Dendritic cell treated with granulocyte-macrophage colony-stimulating factor and Interleukin-4, amounts not matched to agents 40 ng/mL and 50 ng/mL, for 4 days (primary cell): ENCODE measurements at regions of chr20 and their contacts with region 1.

Region 1: DNA sequence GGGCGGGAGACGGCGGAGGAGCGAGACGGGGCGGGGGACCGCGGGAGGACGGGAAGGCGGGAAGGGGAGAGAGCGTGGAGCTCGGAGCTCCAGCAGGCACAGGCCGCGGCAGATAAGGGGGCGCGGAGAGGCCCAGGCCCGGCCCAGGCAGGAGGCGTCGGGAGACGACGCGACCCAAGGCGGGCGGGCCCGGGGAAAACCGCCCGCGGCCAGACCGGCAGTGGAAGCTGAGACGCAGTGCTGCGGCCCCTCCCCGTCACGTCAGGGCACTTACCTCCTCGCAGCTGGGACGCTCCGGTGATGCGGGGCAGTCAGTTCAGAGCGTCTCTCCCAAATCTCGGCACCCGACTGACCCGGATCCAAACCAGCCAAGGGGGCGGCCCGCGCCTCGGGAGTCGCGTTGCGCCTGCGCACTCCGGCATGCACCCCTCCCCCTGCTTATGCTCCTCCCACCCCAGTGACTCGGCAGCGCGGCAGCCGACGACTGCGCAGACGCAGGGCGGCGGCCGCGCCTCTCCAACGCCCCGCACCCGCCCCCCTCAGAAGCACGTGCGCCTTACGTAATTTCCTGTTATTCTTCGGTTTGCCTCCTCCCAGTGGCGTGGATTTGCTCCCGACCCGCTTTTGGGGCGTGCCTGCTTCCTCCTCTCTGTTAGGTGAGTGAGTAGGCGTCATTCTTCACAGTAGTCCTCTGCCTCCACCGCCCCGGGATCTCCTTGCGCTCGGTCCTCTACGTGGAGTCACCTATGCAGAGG is at the start of gene OSER1:
- H3K4me3 Mint-ChIP-seq: peak within 1 kb of the TSS; percentile 100
- H3K27ac Mint-ChIP-seq: peak within 1 kb of the TSS; percentile 97
- H3K4me1 Mint-ChIP-seq: peaks cover 51% of the 10 kb centered on the region
- H3K27me3 Mint-ChIP-seq: no peaks in the 10 kb centered on the region

Region 2: GRCh38 chr20:44310664-44311639 is 100.4 kb after region 1 on chr20 and contains the start of gene FITM2:
- intact Hi-C with region 1: loop called (anchors 1 kb)
- H3K4me3 Mint-ChIP-seq: peak within 1 kb of the TSS; percentile 84
- H3K27ac Mint-ChIP-seq: peak within 1 kb of the TSS; percentile 79
- H3K4me1 Mint-ChIP-seq: peaks cover 19% of the 10 kb centered on the region
- H3K27me3 Mint-ChIP-seq: peaks cover 9% of the 10 kb centered on the region

Region 3: GRCh38 chr20:44475694-44476560 is 265.3 kb after region 1 on chr20 and contains the start of gene TTPAL:
- intact Hi-C with region 1: loop called (anchors 5 kb)
- H3K4me3 Mint-ChIP-seq: peak within 1 kb of the TSS; percentile 98
- H3K27ac Mint-ChIP-seq: peak within 1 kb of the TSS; percentile 94
- H3K4me1 Mint-ChIP-seq: peaks cover 24% of the 10 kb centered on the region
- H3K27me3 Mint-ChIP-seq: peaks cover 6% of the 10 kb centered on the region

Region 4: GRCh38 chr20:44521484-44522481 is 311.2 kb after region 1 on chr20 and contains the start of gene SERINC3:
- intact Hi-C with region 1: loop called (anchors 5 kb)
- H3K4me3 Mint-ChIP-seq: peak within 1 kb of the TSS; percentile 82
- H3K27ac Mint-ChIP-seq: peak within 1 kb of the TSS; percentile 94
- H3K4me1 Mint-ChIP-seq: peaks cover 35% of the 10 kb centered on the region
- H3K27me3 Mint-ChIP-seq: no peaks in the 10 kb centered on the region

Region 5: DNA sequence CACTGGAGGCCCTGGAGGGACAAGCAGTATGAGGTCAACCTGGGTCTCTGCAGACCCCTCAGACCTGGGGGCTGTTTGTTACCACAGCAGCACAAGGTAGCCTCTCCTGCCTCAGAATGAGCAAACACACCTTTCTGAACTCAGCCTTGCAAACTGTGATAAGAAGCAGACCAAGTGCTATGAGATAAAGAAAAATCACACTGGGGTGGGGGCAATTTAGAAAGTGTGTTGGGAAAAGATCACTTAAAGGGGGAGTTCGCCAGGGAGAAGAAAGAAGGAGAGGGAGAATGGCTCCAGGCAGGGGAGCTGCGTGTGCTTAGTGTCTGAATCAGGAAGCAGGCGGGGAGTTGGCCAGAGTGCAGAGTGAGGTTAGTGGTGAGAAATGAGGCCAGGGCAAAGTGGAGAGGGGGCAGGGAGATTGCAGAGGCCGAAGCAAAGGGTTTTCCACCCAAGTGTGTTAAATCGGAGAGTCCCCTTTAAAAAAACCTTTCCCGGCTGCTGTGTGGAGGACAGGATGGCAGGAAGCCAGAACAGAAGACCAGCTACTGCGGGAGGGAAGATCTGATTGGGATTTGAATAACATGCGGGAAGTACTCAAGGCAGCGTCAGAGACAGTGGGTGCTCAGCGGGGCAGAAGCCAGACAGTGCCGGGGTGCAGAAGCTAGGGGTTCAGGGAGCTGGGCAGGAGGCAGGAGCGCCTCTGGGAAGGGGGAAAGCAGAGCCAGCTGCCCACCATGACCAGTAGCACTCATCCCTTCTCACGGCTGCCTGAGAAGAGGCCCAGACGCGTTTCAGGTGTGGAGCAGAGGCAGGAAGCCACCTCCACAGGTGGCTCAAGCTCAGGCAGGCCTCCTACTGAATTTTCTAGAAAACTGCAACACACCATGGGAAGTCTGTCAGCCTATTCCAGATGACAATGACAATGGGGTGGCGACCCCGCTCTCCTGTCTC is 431.9 kb after region 1 on chr20:
- intact Hi-C with region 1: loop called (anchors 10 kb)
- H3K4me3 Mint-ChIP-seq: peak overlapping the region; percentile 17
- H3K27ac Mint-ChIP-seq: peak overlapping the region; percentile 75
- H3K4me1 Mint-ChIP-seq: peaks cover 63% of the 10 kb centered on the region
- H3K27me3 Mint-ChIP-seq: no peaks in the 10 kb centered on the region

Region 6: GRCh38 chr20:44885392-44886265 is 675.0 kb after region 1 on chr20 and contains the start of gene YWHAB:
- intact Hi-C with region 1: loop called (anchors 5 kb)
- H3K4me3 Mint-ChIP-seq: peak within 1 kb of the TSS; percentile 93
- H3K27ac Mint-ChIP-seq: peak within 1 kb of the TSS; percentile 91
- H3K4me1 Mint-ChIP-seq: peaks cover 46% of the 10 kb centered on the region
- H3K27me3 Mint-ChIP-seq: no peaks in the 10 kb centered on the region